Lower leg skin (tissue), 4 donors: ENCODE measurements at regions of chr17 and their contacts with region 1.

Region 1: DNA sequence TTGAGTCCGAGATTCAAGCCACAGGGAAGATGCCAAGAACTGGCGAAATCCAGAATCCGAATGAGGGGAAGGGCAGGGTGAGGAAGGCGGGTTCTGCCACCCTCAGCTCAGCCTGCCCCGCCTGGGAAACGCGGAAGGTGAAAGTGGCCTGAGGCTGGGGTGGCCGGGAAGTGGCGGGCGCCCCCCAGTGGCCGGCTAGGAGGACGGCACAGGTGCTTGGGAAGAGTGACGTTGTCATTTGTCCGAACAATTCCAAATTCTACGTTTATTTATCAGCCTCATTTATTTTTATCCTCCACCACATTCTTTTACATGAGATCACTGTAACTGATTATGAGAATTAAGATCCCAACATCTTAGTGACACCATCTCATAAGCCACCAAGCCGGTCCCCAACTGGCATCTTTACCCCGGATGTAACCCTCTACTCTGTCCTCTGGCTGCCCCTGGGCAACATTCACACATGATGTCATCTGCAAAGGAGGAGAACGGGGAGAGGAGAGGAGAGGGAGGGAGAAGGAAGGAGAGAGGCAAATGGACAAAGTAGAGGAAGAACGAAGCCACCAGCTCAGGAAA is 21.3 kb downstream of the SRCIN1 start:
- DNase-seq: peak; percentile 32 to 95
- H3K4me3 ChIP-seq: no peak overlapping the region
- CTCF ChIP-seq: peak in 1 of 3 donors; percentile 42
- POLR2A ChIP-seq: no peak

Region 2: GRCh38 chr17:38498186-38498752 is 86.2 kb before region 1 on chr17:
- intact Hi-C with region 1: loop called (anchors 10 kb)
- DNase-seq: no peak
- H3K4me3 ChIP-seq: no peak overlapping the region
- CTCF ChIP-seq: no peak
- POLR2A ChIP-seq: no peak

Region 3: GRCh38 chr17:38636054-38636453 is 51.6 kb after region 1 on chr17:
- intact Hi-C with region 1: no loop called
- DNase-seq: peak in 1 of 2 donors; percentile 43
- H3K4me3 ChIP-seq: no peak overlapping the region
- CTCF ChIP-seq: no peak
- POLR2A ChIP-seq: no peak

Region 4: DNA sequence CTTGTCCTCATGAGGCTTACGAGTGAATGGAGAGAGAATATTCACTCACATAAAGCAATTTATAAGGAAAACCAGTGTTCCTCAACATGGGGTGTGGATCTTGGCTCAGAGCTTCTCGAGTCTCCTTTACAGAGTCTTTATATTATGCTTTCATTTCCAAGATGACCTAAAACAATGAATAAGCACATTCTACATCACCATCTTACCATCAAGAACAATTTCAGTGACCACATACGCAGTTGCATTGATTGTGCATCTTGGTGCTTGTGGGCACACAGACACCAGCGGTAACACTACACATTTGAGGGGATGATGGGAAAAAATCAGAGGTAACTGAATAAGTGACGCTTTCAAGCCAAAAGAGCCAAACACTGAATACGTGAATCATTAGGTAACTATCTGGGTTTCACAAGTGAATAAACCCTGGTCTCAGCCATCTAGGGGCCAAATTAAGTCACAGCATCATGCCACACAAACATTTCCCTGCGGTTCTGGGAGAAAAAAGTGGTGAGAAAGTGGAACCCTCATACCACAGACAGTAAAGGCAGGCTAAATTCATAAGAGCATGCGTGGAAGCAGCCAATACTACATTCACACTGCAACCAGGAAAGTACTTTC is 231.2 kb after region 1 on chr17:
- intact Hi-C with region 1: no loop called
- DNase-seq: no peak
- H3K4me3 ChIP-seq: no peak overlapping the region
- CTCF ChIP-seq: no peak
- POLR2A ChIP-seq: no peak